AG04449 (cell line): ENCODE measurements at regions of chr15 and their contacts with region 1.

Region 1: GRCh38 chr15:85737061-85737460 is 57.7 kb downstream of the KLHL25 start:
- DNase-seq: no peak
- H3K4me3 ChIP-seq: no peak overlapping the region
- CTCF ChIP-seq: no peak

Region 2: DNA sequence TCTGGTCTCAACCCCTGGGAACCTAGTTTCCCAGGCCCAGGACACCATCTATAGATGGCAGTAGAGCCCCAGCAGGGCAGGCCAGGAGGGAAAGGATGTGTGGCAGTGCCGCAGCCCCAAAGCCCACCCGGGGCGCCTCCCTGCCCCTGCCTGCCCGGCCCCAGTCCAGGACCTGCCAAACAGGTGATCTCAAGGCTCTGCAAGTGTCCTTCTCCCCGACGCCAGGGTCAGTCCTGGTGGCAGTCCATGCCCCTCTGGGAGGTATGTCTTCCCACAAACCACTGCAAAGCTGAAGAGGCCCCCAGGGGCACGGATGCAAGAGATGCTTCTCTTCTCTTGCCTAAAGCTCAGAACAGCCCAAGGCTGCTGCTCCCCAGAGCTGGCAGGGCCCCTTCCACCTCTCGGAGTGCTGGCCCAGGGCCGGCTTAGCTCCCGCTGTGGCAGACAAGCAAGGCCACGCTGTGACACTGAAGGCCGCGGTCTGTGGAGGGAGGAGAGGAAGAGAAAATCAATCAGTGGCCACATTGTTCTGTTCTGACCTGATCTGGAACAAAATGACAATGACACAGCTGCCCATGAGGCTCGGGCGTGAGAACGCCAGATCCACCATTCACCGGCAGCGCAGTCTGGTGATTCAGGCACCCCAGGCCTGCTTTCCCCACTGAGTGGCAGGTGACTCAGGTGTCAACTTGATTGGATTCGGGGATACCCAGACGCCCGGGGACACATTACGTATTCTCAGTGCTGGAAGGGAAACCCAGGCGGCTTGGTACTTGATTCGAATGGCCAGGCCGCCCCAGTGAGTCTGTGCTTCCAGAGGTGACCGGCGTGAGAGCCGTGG is 23.7 kb after region 1 on chr15:
- CTCF ChIA-PET with region 1: no interaction called
- POLR2A ChIA-PET with region 1: no interaction called
- DNase-seq: no peak
- H3K4me3 ChIP-seq: no peak overlapping the region
- CTCF ChIP-seq: no peak

Region 3: GRCh38 chr15:85831415-85832113 is 94.5 kb after region 1 on chr15:
- CTCF ChIA-PET with region 1: interaction called, 99 read pairs
- POLR2A ChIA-PET with region 1: no interaction called
- DNase-seq: no peak
- H3K4me3 ChIP-seq: no peak overlapping the region
- CTCF ChIP-seq: peak; percentile 77

Region 4: DNA sequence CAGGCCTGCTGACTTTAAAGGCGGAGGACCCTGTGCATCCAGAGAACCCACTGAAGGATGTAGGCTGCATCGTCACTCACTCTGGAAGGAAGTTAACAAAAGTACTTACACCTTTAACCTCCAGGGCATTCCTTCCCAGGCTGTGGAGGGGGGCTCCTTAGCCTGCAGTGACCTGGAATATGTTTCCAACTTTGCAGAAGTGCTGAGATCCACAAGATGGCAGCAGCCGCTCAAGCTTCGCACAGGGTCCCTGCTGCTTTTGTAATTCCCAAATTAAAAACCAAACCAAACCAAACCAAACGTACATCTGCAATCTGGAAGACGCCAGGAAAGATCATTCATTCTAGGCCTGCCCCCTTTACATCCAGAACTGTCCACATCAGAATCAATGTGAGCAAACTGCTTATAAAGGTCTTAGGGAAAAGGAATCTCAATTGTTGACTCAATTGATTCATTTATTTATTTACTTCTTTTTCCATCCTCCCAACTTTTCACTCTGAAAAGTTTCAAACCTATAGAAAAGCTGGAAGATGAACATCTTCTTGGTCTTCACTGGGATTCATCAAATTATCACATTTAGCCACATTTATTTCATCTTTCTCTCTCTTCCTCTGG is 128.1 kb after region 1 on chr15:
- CTCF ChIA-PET with region 1: no interaction called
- POLR2A ChIA-PET with region 1: no interaction called
- DNase-seq: no peak
- H3K4me3 ChIP-seq: no peak overlapping the region
- CTCF ChIP-seq: peak; percentile 64